HAP-1 (cell line): ENCODE measurements at regions of chr6 and their contacts with region 1.

Region 1: DNA sequence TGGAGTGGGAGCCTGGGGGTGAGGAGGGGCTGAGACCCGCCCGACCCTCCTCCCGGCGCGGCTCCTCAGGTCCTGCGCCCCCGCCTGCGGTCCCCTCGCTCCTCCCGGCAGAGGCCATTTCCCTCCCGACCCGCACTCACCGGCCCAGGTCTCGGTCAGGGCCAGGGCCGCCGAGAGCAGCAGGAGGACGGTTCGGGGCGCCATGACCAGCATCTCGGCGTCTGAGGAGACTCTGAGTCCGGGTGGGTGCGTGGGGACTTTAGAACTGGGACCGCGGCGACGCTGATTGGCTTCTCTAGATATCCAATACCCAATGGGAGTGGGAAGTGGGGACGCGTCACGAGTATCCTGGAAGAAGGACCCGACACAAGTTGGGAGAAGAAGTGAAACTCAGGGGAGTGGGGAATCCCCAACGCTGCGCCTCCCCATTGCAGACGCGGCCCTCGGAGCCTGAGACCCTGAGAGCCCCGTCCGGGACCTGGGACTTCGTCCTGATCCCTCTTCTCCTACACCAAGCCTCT is at the start of gene HLA-B:
- DNase-seq: peak; percentile 52 to 70
- H3K4me3 ChIP-seq: peak within 1 kb of the TSS; percentile 48
- H3K4me1 ChIP-seq: no peaks in the 10 kb centered on the region
- H3K27me3 ChIP-seq: 0 out of 2 replicates have a peak, but pooled peaks cover 3% of the 10 kb centered on the region

Region 2: DNA sequence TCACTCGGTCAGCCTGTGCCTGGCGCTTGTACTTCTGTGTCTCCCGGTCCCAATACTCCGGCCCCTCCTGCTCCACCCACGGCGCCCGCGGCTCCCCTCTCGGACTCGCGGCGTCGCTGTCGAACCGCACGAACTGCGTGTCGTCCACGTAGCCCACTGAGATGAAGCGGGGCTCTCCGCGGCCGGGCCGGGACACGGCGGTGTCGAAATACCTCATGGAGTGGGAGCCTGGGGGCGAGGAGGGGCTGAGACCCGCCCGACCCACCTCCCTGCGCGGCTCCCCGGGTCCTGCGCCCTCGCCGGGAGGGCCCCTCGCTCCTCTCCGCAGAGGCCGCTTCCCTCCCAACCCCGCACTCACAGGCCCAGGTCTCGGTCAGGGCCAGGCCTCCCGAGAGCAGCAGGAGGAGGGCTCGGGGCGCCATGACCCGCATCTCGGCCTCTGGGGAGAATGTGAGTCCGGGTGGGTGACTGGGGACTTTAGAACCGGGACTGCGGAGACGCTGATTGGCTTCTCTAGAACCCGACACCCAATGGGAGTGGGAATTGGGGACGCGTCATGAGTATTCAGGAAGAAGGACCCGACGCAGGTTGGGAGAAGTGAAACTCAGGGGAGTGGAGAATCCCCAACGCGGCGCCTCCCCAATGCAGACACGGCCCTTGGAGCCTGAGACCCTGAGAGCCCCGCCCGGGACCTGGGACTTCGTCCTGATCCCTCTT is 85.2 kb before region 1 on chr6 and contains the start of gene HLA-C:
- in situ Hi-C with region 1: loop called (anchors 5 kb)
- DNase-seq: peak; percentile 88 to 92
- H3K4me3 ChIP-seq: peak within 1 kb of the TSS; percentile 33
- H3K4me1 ChIP-seq: no peaks in the 10 kb centered on the region; the same call in 1 of the 2 replicates
- H3K27me3 ChIP-seq: no peaks in the 10 kb centered on the region

Region 3: GRCh38 chr6:31827286-31828079 is 470.5 kb after region 1 on chr6 and contains the start of gene HSPA1B:
- in situ Hi-C with region 1: no loop called
- DNase-seq: peak; percentile 99 to 100
- H3K4me3 ChIP-seq: peak within 1 kb of the TSS; percentile 94
- H3K4me1 ChIP-seq: peaks cover 39% of the 10 kb centered on the region
- H3K27me3 ChIP-seq: no peaks in the 10 kb centered on the region